Activated CD4-positive, alpha-beta T cell treated with anti-CD3 and anti-CD28 coated beads for 36 hours (primary cell): ENCODE measurements at regions of chr2 and their contacts with region 1.

Region 1: GRCh38 chr2:216412022-216412999 is at the start of gene SMARCAL1:
- DNase-seq: peak; percentile 100
- ATAC-seq: peak; percentile 93
- H3K4me3 Mint-ChIP-seq: peak within 1 kb of the TSS; percentile 94
- H3K27ac Mint-ChIP-seq: peak within 1 kb of the TSS; percentile 93
- H3K4me1 Mint-ChIP-seq: peaks cover 13% of the 10 kb centered on the region
- H3K27me3 Mint-ChIP-seq: no peaks in the 10 kb centered on the region
- total RNA-seq, gene SMARCAL1: 25.9 to 27.7 TPM

Region 2: DNA sequence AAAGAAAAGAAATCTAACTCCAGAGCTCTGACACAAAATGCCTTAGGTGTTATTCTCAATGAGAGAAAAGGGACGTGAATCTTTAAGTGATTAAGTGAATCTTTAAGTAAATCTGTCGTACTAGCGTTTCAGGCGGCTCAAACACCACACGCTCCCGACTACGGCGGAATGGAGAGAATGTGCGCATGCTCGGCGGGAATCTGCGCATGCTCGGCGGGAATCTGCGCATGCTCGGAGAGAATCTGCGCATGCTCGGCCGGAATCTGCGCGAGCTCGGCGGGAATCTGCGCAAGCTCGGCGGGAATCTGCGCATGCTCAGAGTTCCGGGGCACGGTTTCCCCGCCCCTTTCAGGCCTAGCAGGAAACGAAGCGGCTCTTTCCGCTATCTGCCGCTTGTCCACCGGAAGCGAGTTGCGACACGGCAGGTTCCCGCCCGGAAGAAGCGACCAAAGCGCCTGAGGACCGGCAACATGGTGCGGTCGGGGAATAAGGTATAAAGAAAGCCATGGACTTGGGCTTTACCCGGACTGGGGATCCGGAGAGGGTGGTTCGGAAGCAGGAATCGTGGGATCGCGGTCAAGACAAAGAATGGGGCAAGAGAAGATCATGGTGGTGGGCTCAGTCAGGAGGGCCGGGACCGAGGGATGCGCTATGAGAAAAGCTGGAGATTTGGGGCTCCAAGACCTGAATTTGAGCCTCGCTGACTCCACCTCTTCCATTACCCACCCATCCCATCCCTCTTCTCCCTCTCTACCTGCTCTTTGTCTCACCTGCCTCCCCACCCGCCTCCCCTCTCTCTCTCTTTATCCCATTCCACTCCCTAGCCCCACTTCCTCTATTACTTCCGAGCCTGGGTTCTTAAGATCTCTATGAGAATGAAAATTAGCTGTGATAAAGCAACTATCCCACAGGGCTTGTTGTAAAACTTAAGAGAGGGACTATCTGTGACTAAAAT is 303.1 kb before region 1 on chr2 and contains the start of gene XRCC5:
- CTCF ChIA-PET with region 1: interaction called, 4 read pairs
- POLR2A ChIA-PET with region 1: interaction called, 4 read pairs
- intact Hi-C with region 1: loop called (anchors 1 kb)
- DNase-seq: peak; percentile 99
- ATAC-seq: peak; percentile 75
- H3K4me3 Mint-ChIP-seq: peak within 1 kb of the TSS; percentile 95
- H3K27ac Mint-ChIP-seq: peak within 1 kb of the TSS; percentile 98
- H3K4me1 Mint-ChIP-seq: peaks cover 46% of the 10 kb centered on the region
- H3K27me3 Mint-ChIP-seq: no peaks in the 10 kb centered on the region
- total RNA-seq, gene XRCC5: 395 to 536 TPM

Region 3: GRCh38 chr2:216114714-216115557 is 297.4 kb before region 1 on chr2:
- CTCF ChIA-PET with region 1: interaction called, 4 read pairs
- POLR2A ChIA-PET with region 1: interaction called, 4 read pairs
- intact Hi-C with region 1: loop called (anchors 1 kb)
- DNase-seq: peak; percentile 98
- ATAC-seq: peak; percentile 81
- H3K4me3 Mint-ChIP-seq: peak overlapping the region; percentile 79
- H3K27ac Mint-ChIP-seq: peak overlapping the region; percentile 95
- H3K4me1 Mint-ChIP-seq: peaks cover 95% of the 10 kb centered on the region
- H3K27me3 Mint-ChIP-seq: no peaks in the 10 kb centered on the region

Region 4: DNA sequence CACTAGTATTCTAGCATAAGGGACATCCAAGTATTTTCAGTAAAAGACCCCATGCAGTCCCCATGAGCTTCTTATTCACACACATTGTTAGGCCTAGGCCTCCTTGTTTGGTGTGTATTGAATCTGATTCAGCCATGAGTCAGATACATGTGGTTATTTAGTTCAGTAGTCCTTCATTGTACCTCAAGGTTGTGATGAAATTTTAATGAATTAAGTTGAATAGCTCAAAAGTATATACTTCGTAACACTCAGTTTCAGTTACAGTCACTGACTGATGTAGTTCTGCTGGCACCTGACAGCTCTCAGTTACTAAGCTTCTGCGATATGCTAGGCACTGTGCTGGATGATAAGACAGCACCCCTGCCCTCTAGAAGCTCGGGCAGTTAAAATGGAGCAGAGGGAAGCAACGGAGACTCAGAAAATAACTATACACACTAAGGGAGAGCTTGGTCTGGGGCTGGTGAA is 216.7 kb before region 1 on chr2:
- CTCF ChIA-PET with region 1: interaction called, 4 read pairs
- POLR2A ChIA-PET with region 1: no interaction called
- intact Hi-C with region 1: loop called in 1 of 2 experiments (anchors 1 kb)
- DNase-seq: peak; percentile 62
- ATAC-seq: peak; percentile 96
- H3K4me3 Mint-ChIP-seq: peak overlapping the region; percentile 1
- H3K27ac Mint-ChIP-seq: peak overlapping the region; percentile 92
- H3K4me1 Mint-ChIP-seq: peaks cover 69% of the 10 kb centered on the region
- H3K27me3 Mint-ChIP-seq: no peaks in the 10 kb centered on the region

Region 5: GRCh38 chr2:216222650-216223352 is 189.5 kb before region 1 on chr2:
- CTCF ChIA-PET with region 1: interaction called, 3 read pairs
- POLR2A ChIA-PET with region 1: no interaction called
- intact Hi-C with region 1: loop called in 1 of 2 experiments (anchors 5 kb)
- DNase-seq: peak; percentile 49
- ATAC-seq: peak; percentile 70
- H3K4me3 Mint-ChIP-seq: peak overlapping the region; percentile 5
- H3K27ac Mint-ChIP-seq: peak overlapping the region; percentile 83
- H3K4me1 Mint-ChIP-seq: peaks cover 33% of the 10 kb centered on the region
- H3K27me3 Mint-ChIP-seq: no peaks in the 10 kb centered on the region

Region 6: DNA sequence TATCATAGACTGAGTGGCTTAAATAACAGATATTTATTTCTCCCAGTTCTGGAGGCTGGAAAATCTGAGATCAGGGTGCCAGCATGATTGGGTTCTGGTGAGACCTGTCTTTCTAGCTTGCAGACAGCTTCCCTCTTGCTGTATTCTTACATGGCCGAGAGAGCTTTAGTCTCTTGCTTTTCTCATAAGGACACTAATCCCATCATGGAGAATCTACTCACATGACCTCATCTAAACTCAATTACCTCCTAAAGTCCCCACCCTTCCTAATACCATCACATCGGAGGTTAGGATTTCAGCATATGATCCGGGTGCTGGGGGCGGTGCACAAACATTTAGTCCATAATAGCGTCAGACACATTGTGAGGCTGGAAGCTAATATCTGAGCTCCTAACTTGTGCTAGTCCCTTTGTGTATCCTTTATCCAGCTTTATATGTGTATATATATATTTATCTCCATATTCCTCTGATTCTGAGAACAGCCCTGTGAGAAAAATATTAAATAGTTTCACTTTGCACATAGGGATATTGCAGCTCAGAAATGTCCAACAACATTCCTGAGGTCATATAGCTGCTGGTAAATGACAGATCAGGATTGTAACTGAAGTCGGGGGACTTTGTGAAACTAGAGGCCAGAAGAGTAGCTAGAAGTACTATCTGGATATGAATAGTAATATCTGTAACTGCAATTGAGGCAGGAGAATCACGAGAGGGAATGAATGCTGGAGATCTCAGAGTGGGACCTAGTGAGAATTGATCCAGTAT is 68.9 kb before region 1 on chr2:
- CTCF ChIA-PET with region 1: no interaction called
- POLR2A ChIA-PET with region 1: no interaction called
- intact Hi-C with region 1: no loop called
- DNase-seq: no peak
- ATAC-seq: no peak
- H3K4me3 Mint-ChIP-seq: no peak overlapping the region
- H3K27ac Mint-ChIP-seq: no peak overlapping the region
- H3K4me1 Mint-ChIP-seq: peaks cover 52% of the 10 kb centered on the region
- H3K27me3 Mint-ChIP-seq: no peaks in the 10 kb centered on the region

Region 7: DNA sequence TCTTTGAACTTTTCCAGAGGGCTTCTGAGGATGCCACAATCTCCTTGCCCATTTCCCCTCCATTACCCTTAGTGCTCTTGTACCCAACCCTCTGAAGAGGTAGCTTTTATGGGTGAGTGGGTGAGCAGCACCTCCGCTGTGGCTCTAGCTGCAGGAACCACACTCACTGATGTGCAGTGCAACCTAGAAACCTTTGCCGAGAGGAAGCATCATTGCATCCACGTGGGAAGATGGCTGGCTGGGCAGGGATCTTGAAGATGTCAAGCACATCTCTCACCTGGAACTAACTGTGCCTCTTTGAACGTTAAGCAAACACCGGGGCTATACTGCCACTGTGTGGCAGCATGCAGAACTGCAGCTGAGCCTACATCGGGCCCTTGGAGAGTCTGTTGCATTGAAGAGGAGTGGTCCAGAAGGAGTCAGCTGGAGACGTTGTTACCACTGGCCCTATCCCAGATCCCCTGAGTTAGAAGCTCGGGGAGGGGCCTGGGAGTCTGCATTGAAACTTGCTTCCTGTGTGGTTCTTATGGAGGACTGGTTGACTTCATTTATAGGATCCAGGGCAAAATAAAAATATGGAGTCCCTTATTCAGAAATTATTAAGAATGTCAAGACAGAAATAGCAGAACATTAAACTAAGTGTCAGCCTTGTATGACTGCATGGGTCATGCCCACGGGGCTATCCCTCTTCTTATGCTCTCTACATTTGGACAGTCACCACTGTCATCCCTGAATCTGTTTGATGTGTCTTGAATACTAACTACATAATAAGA is 254.3 kb after region 1 on chr2:
- CTCF ChIA-PET with region 1: no interaction called
- POLR2A ChIA-PET with region 1: no interaction called
- intact Hi-C with region 1: loop called in 1 of 2 experiments (anchors 5 kb)
- DNase-seq: peak; percentile 80
- ATAC-seq: peak; percentile 85
- H3K4me3 Mint-ChIP-seq: no peak overlapping the region
- H3K27ac Mint-ChIP-seq: no peak overlapping the region
- H3K4me1 Mint-ChIP-seq: no peaks in the 10 kb centered on the region
- H3K27me3 Mint-ChIP-seq: peaks cover 2% of the 10 kb centered on the region

Region 8: DNA sequence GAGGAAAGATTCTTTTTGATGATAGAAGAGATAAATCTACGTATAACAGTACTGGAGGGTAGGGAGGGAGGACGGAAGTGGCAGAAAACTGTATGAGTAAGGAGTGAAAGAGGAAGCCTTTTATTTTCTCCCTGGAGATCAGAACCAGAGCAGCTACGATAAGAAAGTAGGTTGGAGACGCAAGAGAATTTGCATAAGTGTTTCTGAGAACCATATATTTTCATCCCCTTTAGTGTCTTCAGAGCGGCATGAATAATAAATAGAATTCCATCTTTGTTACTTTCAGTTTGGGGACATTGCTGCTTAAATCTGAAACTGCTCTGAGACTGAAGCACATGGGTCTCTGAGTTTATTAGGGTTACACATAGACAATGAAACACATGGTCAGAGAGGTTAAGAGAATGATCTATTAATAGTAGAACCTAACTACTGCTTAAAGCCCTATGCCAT is 677.7 kb after region 1 on chr2:
- CTCF ChIA-PET with region 1: no interaction called
- POLR2A ChIA-PET with region 1: no interaction called
- intact Hi-C with region 1: no loop called
- DNase-seq: peak; percentile 44
- ATAC-seq: peak; percentile 83
- H3K4me3 Mint-ChIP-seq: no peak overlapping the region
- H3K27ac Mint-ChIP-seq: no peak overlapping the region
- H3K4me1 Mint-ChIP-seq: peaks cover 58% of the 10 kb centered on the region
- H3K27me3 Mint-ChIP-seq: peaks cover 4% of the 10 kb centered on the region